ENCODE measurements at regions of chr17 and their contacts with region 1.

Region 1: DNA sequence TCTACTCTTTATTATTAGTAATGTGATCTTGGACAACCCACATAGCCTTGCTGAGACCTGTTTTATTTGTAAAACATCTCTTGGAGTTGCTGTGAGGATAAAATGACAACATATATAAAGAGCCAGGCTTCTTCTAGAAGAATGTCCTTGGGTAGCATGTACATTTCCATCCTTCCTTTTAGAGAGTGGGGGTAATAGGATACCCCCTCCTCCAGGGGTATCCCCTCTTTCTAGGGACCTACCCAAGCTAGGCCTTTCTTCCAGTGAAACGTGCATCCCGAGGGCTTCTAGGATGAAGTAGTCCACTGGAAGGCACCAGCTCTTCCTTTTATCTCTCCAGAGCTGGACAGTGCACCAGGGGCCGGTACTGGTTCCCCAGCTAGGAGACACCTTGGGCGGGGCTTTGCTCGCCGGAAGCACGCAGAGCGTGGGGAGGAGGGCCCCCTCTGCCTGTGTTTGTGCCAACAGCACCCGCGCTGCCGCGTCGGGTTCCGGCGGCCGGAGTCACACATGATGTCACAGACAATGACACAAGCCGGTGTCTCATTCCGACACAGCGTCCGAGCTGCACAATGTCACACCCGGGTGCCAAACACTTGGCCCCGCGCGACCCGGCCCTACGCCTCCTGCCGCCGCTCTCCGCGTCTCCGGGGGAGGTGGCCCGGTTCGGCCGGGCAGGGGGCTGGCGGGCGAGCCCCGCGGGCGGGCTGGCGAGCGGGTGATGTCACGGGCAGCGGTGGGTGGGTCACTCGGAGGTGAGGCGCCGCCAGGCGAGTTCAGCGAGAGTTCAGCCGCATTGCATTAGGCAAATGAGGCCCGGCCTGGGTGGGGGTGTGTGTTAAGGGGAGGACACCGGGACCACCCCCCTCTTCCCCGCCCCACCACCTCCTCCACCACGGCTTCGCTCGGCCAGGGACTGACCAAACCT is 23.4 kb downstream of the GJD3 start:
- DNase-seq: peak; percentile 93
- ATAC-seq: peak; percentile 58 to 79 (median 73)
- H3K4me3 ChIP-seq: peak overlapping the region; percentile 78 to 97 (median 90)
- H3K27ac ChIP-seq: peak overlapping the region; percentile 88 to 99 (median 98)
- H3K4me1 ChIP-seq: peaks cover 10 to 82% (median 70%) of the 10 kb centered on the region in 9 donors
- H3K27me3 ChIP-seq: no peaks in the 10 kb centered on the region
- CTCF ChIP-seq: peak in 6 of 9 donors; percentile 32 to 55 (median 42)

Region 2: DNA sequence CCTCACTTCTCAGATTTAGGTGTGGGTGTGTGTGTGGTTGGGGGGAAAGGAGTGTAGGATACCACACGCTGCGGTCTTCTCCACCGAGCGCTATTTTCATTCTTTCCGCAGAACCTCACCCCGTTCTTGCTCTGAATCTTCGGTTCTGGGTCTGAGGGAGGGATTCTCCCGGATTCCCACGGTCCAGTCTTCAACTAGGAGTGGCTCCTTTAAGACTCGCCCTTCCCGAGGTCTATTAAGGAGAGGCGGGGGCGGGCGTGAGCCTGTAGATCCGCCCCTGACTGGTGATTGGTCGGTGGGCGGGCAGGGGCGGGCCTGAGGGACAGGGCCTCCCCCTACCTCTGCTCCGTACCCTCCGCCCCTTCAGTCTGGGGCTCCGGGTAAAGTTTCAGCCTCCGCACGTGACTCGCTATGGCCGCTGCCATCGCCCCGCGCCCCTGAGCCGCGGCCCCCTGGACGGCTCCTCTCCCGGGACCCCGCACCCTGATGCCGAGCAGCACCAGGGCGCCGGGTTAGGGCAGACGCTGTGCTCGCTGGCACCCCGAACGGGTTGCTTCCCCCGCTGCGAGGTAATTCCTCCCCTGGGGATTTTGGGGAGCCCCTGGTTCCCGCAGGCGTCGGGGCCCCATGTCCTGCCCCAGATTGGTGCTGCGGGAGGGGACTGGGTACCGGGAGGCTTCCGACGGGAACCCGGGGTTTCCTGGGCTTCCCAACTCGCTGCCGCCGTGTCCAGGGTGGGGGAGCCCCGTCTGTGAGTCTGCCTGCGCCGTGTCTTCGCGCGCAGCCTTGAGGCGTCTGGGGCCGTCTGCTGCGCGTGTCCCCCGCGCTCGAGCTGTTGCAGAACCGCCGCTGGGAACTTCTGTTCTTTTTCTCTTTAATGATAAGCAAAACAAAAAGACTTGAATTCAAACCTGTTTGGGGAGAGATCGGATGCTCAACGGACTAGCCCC is 23.0 kb before region 1 on chr17:
- intact Hi-C with region 1: loop called in 5 of 10 experiments (anchors 2 to 5 kb)
- DNase-seq: peak; percentile 94 to 96
- ATAC-seq: peak; percentile 86 to 93 (median 91)
- H3K4me3 ChIP-seq: peak overlapping the region; percentile 75 to 100 (median 94)
- H3K27ac ChIP-seq: peak overlapping the region; percentile 83 to 98 (median 96)
- H3K4me1 ChIP-seq: peaks cover 47 to 96% (median 88%) of the 10 kb centered on the region in 9 donors
- H3K27me3 ChIP-seq: no peaks in the 10 kb centered on the region
- CTCF ChIP-seq: peak in 1 of 9 donors; percentile 11

Region 3: GRCh38 chr17:40325156-40326013 is 15.8 kb before region 1 on chr17:
- intact Hi-C with region 1: loop called in 2 of 10 experiments (anchors 1 to 2 kb)
- DNase-seq: no peak
- ATAC-seq: no peak
- H3K4me3 ChIP-seq: peak overlapping the region in 1 of 10 donors; percentile 34
- H3K27ac ChIP-seq: peak overlapping the region in 9 of 10 donors; percentile 59 to 98 (median 97)
- H3K4me1 ChIP-seq: peaks cover 70 to 100% (median 99%) of the 10 kb centered on the region in 9 donors
- H3K27me3 ChIP-seq: no peaks in the 10 kb centered on the region
- CTCF ChIP-seq: no peak